ENCODE measurements at regions of chr15 and their contacts with region 1.

Region 1: DNA sequence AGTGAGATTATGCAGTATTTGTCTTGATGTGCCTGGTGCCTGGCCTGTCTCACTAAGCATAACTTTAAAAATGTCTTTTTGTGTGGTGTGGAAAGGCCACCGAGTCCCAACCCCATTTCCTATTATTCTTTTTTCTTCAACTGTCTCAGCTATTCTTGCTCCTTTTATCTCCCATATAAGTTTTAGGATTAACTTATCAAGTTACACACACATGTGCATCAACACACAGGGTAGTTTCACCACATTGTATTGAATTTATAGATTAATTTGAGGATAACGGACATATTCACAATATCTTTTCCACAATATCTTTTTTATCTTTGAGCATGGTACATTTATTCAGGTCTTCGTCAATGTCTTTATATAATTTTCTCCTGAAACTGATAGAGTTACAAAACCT is 127.6 kb downstream of the RYR3 start:
- DNase-seq: no peak
- H3K4me3 ChIP-seq: no peak overlapping the region
- H3K27ac ChIP-seq: no peak overlapping the region
- H3K4me1 ChIP-seq: no peaks in the 10 kb centered on the region
- H3K27me3 ChIP-seq: peaks cover 14% of the 10 kb centered on the region
- CTCF ChIP-seq: no peak

Region 2: GRCh38 chr15:33309602-33310276 is 128.7 kb before region 1 on chr15:
- CTCF ChIA-PET with region 1: no interaction called
- POLR2A ChIA-PET with region 1: no interaction called
- intact Hi-C with region 1: loop called (anchors 5 kb)
- DNase-seq: peak; percentile 14
- H3K4me3 ChIP-seq: no peak overlapping the region
- H3K27ac ChIP-seq: no peak overlapping the region
- H3K4me1 ChIP-seq: no peaks in the 10 kb centered on the region
- H3K27me3 ChIP-seq: peaks cover 79% of the 10 kb centered on the region
- CTCF ChIP-seq: peak; percentile 35

Measured in A673 (cell line).